HCT116 (cell line): ENCODE measurements at regions of chr15 and their contacts with region 1.

Region 1: DNA sequence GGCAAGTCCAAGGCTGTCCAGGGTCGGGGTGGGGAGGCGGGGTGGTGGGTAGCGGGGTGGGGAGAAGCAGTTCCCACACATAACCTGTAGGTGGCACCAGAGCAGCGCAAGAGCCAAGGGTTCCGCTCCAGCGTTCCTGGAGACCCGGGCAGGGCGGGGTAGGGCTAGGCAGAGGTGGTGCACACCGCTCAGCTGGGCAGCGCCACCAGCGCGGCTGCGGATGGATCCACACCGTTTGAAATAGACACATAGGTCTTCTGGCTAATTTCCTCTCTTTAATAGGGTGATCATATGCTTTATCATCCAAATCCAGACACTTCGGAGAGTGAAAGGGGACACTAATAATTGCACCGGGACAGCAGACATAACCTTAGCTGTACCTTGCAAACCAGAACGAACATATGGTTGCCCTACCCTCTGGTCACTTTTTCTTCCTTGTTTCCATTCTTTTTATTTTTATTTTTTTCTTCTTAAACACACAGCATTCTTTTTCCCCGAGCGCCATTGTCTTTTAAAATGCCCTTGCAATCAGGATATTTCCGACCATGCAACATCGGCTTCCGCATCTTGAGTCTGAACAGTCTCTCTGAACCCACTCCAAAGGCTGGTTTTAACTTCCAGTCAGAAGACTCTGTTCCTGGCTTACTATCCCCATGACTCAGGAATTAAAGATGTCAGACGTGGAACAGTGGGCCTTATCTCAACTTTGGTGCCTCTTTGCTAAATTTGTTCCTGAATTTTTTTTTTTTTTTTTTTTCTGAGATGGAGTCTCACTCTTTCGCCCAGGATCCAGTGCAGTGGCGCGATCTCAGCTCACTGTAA is 12.5 kb upstream of the ZSCAN2 start:
- DNase-seq: peak; percentile 85
- ATAC-seq: peak; percentile 99
- H3K4me3 ChIP-seq: peak overlapping the region; percentile 35 to 47
- H3K27ac ChIP-seq: no peak overlapping the region
- H3K4me1 ChIP-seq: peaks cover 0 to 11% of the 10 kb centered on the region in 2 experiments; a peak in 2 of 4 replicates
- H3K27me3 ChIP-seq: no peaks in the 10 kb centered on the region
- CTCF ChIP-seq: peak; percentile 62 to 72 (median 66)
- POLR2A ChIP-seq: no peak
- RAD21 ChIP-seq: peak; percentile 83

Region 2: DNA sequence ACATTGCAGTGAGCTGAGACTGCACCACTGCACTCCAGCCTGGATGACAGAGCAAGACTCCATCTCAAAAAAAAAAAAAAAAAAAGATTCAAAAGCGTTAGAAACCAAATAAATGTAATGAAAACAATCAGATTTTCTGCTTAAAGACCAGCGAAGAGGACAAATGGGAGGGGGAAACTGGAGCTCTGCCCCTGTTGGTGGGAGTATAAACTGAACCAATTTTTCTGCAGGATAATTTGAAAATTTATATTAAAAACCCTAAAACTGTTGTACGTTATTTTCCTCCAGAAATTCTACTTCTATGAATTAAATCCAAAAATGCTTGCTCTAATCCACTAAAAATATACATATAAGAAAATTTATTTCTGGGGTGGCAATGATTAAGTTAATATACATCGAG is 12.8 kb before region 1 on chr15:
- CTCF ChIA-PET with region 1: interaction called, 14 read pairs
- POLR2A ChIA-PET with region 1: interaction called, 3 read pairs
- RAD21 ChIA-PET with region 1: interaction called, 3 to 7 read pairs
- intact Hi-C with region 1: no loop called
- DNase-seq: no peak
- ATAC-seq: no peak
- H3K4me3 ChIP-seq: no peak overlapping the region
- H3K27ac ChIP-seq: no peak overlapping the region
- H3K4me1 ChIP-seq: peaks cover 15 to 24% of the 10 kb centered on the region in 2 experiments
- H3K27me3 ChIP-seq: no peaks in the 10 kb centered on the region
- CTCF ChIP-seq: no peak
- POLR2A ChIP-seq: no peak
- RAD21 ChIP-seq: no peak